ENCODE measurements at regions of chr14 and their contacts with region 1.

Region 1: GRCh38 chr14:32393118-32393517 is 64.0 kb downstream of the AKAP6 start:
- DNase-seq: no peak

Region 2: GRCh38 chr14:30957813-30958370 is 1435.2 kb before region 1 on chr14:
- intact Hi-C with region 1: loop called in 1 of 2 experiments (anchors 5 kb)
- DNase-seq: no peak

Measured in posterior vena cava (tissue), 2 donors.